Right cardiac atrium (tissue), 5 donors: ENCODE measurements at regions of chr1 and their contacts with region 1.

Region 1: DNA sequence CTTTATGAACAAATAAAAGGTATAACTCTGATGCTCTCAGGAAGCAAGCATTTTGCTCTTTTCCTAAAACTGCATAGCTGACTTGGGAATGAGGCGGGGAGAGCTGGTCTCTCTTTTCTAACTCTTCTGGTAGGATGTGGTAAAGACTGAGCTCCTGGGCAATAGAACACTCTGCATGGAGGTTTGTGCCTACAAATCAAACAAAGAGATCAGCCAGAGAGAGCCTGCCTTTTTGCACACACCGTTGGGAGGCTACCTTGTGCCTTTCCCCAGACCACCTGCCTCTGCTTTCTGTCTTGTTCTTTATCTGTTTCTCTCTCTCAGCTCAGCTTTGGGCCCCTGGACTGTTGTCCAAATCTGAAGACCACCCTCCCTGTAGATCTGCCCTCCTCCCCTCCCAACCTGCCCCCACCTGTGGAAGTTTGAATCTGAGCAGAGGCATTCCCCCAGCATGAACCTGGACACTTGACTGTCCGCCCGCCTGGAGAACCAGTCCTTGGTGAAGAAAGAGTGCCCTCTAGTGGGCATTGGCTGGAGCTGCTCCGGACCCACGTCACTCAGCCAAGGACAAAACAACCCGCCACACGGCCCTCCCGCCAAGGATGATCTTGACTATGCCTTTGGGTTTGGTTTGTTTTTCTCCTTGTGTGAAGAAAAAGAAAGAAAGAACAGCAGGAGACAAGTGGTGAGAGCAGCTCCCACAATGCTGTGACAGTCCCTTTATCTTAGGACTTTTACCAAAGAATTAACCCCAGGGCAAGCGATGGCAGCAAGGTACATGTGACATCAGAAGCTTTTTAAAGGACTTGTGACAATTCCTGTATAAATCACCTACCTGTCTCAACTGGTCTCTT is 228.2 kb downstream of the PBX1 start:
- DNase-seq: peak; percentile 83 to 92 (median 90)
- ATAC-seq: peak; percentile 84 to 91
- H3K4me3 ChIP-seq: no peak overlapping the region
- H3K27ac ChIP-seq: peak overlapping the region; percentile 2
- H3K4me1 ChIP-seq: peaks cover 18% of the 10 kb centered on the region
- H3K27me3 ChIP-seq: no peaks in the 10 kb centered on the region

Region 2: GRCh38 chr1:164433141-164433817 is 353.9 kb before region 1 on chr1:
- intact Hi-C with region 1: loop called in 1 of 4 experiments (anchors 10 kb)
- DNase-seq: no peak
- ATAC-seq: no peak
- H3K4me3 ChIP-seq: no peak overlapping the region
- H3K27ac ChIP-seq: no peak overlapping the region
- H3K4me1 ChIP-seq: no peaks in the 10 kb centered on the region
- H3K27me3 ChIP-seq: no peaks in the 10 kb centered on the region

Region 3: DNA sequence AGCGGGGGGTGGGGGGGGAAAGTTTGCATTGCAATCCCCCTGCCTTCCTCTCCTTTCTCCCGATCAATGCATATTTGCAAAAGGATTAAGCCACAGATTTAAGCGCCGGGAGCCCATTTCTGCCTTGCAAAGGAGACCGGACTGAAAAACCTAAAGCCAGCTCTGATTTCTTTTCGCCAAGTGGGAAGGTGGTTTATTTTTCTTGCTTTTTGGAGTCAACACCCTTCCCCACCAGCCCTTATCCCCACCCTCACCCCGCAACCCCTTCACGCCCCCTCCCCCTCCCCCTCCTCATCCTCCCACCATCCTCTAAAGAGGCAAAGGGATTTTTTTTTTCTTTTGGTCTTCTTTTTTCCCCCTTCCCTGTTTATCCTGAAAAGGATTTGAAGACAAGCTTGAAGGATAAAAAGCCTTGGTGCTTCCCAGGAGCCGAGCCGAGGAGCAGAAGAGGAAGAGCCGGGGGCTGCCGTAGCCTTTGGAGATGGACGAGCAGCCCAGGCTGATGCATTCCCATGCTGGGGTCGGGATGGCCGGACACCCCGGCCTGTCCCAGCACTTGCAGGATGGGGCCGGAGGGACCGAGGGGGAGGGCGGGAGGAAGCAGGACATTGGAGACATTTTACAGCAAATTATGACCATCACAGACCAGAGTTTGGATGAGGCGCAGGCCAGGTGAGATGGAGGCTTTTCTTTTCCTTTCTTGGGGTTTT is 227.7 kb before region 1 on chr1:
- intact Hi-C with region 1: loop called in 3 of 4 experiments (anchors 2 to 10 kb)
- DNase-seq: peak; percentile 44 to 70 (median 70)
- ATAC-seq: peak; percentile 42 to 60
- H3K4me3 ChIP-seq: peak overlapping the region; percentile 96
- H3K27ac ChIP-seq: peak overlapping the region; percentile 99
- H3K4me1 ChIP-seq: no peaks in the 10 kb centered on the region
- H3K27me3 ChIP-seq: no peaks in the 10 kb centered on the region

Region 4: GRCh38 chr1:164617377-164618201 is 169.6 kb before region 1 on chr1:
- intact Hi-C with region 1: loop called in 1 of 4 experiments (anchors 5 kb)
- DNase-seq: peak in 1 of 3 donors; percentile 64
- ATAC-seq: no peak
- H3K4me3 ChIP-seq: no peak overlapping the region
- H3K27ac ChIP-seq: no peak overlapping the region
- H3K4me1 ChIP-seq: peaks cover 20% of the 10 kb centered on the region
- H3K27me3 ChIP-seq: no peaks in the 10 kb centered on the region

Region 5: GRCh38 chr1:164637461-164638375 is 149.5 kb before region 1 on chr1:
- intact Hi-C with region 1: loop called in 1 of 4 experiments (anchors 10 kb)
- DNase-seq: peak; percentile 64 to 79 (median 75)
- ATAC-seq: peak; percentile 74 to 84
- H3K4me3 ChIP-seq: no peak overlapping the region
- H3K27ac ChIP-seq: peak overlapping the region; percentile 89
- H3K4me1 ChIP-seq: peaks cover 17% of the 10 kb centered on the region
- H3K27me3 ChIP-seq: no peaks in the 10 kb centered on the region

Region 6: DNA sequence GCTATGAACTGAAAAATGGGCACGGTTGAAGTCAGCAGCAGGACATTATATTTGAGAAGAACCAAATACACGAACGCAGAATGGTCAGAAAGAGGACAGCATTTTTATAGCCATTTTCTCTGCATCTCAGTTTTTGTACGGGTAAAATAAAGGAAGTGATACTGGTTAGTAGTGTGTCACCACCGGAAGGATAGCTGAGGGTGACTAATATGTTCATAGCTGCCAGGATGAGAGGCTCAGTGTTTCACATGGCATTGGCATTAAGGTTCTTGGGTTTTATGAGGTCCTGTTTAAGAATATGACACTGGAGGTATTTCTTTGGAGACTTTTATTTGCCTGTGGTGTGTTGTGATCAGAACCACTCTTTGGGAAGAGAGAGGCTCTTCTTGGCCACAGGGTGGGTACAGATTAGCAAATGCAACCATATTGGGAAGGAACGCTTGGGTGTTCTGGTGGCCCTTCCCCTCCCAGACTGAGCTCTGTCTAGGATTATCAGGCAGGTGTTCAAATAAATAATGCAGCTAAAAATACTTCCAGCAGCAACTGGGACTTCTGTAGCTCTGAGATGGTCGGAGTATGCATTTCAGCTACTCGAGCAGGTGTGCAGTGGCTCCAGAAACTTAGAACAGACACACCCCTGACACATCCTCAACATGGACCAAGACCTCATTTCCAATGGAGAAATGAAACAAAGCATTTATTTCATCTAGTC is 70.1 kb before region 1 on chr1:
- intact Hi-C with region 1: loop called in 1 of 4 experiments (anchors 10 kb)
- DNase-seq: no peak
- ATAC-seq: no peak
- H3K4me3 ChIP-seq: no peak overlapping the region
- H3K27ac ChIP-seq: no peak overlapping the region
- H3K4me1 ChIP-seq: peaks cover 21% of the 10 kb centered on the region
- H3K27me3 ChIP-seq: no peaks in the 10 kb centered on the region